ENCODE measurements at regions of chr20 and their contacts with region 1.

Region 1: DNA sequence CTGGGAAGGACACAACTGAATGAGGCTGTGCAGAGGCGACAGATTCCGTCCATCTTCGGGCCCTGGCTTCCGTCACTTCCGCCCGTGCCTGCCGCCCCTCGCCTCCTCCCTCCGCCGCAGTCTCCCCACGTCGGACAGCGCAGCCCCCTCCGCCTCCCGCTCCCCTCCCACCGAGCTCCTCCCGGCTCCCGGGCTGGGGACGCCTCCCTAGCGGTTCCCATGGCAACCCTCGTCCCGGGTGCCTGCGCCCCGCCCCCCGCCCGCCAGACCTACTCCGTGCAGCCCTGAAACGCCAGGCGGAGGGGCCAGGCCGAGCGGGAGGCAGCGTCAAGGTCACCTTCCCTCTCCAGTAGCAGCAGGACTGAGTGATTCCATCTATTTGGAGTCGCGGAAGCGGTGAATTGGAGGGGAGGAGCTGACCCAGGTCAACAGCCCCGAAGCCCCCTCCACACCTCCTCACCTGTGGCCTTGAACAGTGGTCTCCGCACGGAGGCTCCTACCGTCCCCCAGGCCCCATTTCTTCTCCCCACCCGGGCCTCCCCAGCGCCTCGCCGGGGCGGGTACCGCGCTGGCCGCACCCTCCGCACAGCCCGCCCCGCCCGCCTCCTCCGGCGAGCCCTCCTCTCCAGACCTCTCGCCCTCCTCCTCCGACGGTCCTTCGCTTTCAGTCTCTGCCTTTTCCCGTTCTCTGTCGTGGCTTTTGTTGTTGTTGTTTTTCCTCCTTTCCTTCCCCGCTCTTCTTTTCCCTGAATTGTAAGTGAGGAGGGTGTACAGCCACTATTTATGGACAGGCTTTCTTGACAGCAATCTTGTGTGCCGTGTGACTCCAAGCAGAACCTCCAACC is 951 bp downstream of the NRSN2 start:
- DNase-seq: no peak
- ATAC-seq: peak; percentile 91
- H3K4me3 ChIP-seq: peak overlapping the region; percentile 62 to 83
- H3K27ac ChIP-seq: peak overlapping the region; percentile 88
- H3K4me1 ChIP-seq: peaks cover 13% of the 10 kb centered on the region
- H3K27me3 ChIP-seq: no peaks in the 10 kb centered on the region
- CTCF ChIP-seq: no peak

Region 2: GRCh38 chr20:407953-408842 is 60.3 kb after region 1 on chr20 and contains the start of gene RBCK1:
- CTCF ChIA-PET with region 1: no interaction called
- POLR2A ChIA-PET with region 1: no interaction called
- in situ Hi-C with region 1: no loop called
- intact Hi-C with region 1: loop called (anchors 2 kb)
- DNase-seq: no peak
- ATAC-seq: peak; percentile 87
- H3K4me3 ChIP-seq: peak within 1 kb of the TSS; percentile 90 to 94
- H3K27ac ChIP-seq: peak within 1 kb of the TSS; percentile 92
- H3K4me1 ChIP-seq: peaks cover 18% of the 10 kb centered on the region
- H3K27me3 ChIP-seq: no peaks in the 10 kb centered on the region
- CTCF ChIP-seq: no peak
- total RNA-seq, gene RBCK1: 97.1 TPM

Measured in Panc1 (cell line).